ENCODE measurements at regions of chr17 and their contacts with region 1.

Region 1: DNA sequence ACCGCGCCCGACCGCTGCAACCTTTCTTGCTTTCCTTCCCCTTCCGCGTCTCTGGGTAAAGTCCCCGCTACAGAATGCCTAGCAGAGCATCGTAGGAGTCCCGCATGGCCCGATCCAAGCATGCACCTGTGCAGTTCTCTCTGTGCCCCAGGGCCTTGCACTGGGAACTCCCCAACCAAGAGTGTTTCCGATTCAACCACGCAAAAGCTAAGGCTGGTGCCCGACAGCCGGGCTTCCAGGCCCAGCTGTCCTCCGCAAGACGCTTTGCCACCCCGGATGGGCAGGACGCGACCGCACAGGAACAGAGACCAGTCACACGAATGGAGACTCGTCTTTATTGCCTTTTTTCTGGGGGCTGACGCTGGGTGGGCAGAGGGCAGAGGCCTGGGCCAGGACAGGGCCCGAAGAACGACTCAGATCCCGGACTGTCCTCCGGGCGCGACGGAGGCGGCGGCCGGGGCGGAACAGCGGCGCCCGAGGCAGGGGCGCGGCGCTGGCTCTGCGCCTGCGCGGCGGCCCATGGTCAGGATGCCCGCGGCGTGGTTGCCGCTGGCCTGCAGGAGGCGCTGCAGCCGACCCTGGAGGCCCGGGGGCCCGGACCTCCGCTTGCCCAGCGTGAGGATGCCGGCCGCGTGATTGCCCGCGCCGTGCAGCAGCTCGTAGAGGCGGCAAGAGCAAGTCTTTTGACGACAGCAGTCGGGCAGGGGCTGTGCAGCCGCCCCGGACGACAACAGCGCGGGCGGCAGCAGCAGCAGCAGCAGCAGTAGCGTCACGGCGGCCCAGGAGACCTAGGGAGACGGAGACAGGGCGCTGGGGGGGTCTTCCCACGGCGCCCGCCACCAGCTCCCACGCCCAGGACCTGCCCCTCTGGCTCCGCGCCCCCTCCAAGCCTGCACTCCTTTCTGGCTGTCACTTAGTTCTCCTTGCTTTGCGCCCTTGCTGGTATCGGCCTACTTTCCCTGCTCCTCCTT is 1.2 kb downstream of the HCRT start:
- DNase-seq: peak; percentile 89
- ATAC-seq: peak; percentile 70
- H3K4me3 Mint-ChIP-seq: peak overlapping the region; percentile 91
- H3K27ac Mint-ChIP-seq: peak overlapping the region; percentile 88
- H3K4me1 Mint-ChIP-seq: peaks cover 46% of the 10 kb centered on the region
- H3K27me3 Mint-ChIP-seq: peaks cover 7% of the 10 kb centered on the region

Region 2: GRCh38 chr17:41966463-41967140 is 217.4 kb before region 1 on chr17 and contains the start of gene CNP:
- CTCF ChIA-PET with region 1: interaction called, 4 read pairs
- POLR2A ChIA-PET with region 1: interaction called, 12 read pairs
- intact Hi-C with region 1: loop called in 1 of 2 experiments (anchors 1 kb)
- DNase-seq: peak; percentile 95
- ATAC-seq: peak; percentile 75
- H3K4me3 Mint-ChIP-seq: peak within 1 kb of the TSS; percentile 79
- H3K27ac Mint-ChIP-seq: peak within 1 kb of the TSS; percentile 82
- H3K4me1 Mint-ChIP-seq: peaks cover 36% of the 10 kb centered on the region
- H3K27me3 Mint-ChIP-seq: no peaks in the 10 kb centered on the region
- total RNA-seq, gene CNP: 55.1 to 77.0 TPM

Region 3: GRCh38 chr17:42120770-42121769 is 63.0 kb before region 1 on chr17 and contains the start of gene KAT2A:
- CTCF ChIA-PET with region 1: interaction called, 5 read pairs
- POLR2A ChIA-PET with region 1: no interaction called
- intact Hi-C with region 1: loop called (anchors 1 kb)
- DNase-seq: peak; percentile 90
- ATAC-seq: peak; percentile 93
- H3K4me3 Mint-ChIP-seq: peak within 1 kb of the TSS; percentile 70
- H3K27ac Mint-ChIP-seq: peak within 1 kb of the TSS; percentile 76
- H3K4me1 Mint-ChIP-seq: peaks cover 29% of the 10 kb centered on the region
- H3K27me3 Mint-ChIP-seq: no peaks in the 10 kb centered on the region
- total RNA-seq, gene KAT2A: 46.2 to 54.8 TPM

Region 4: DNA sequence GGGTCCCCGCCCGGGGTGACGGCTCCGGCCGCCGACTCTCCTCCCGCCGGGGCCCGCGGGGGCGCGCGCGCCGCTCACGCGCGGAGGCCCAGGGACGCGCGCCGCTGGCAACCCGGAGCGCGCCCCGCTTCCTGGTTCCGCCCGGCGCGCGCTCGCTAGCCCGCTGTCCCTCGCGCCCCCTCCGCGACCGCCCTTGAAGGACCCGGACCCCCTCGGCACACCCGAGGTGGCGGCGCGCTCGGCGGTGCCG is 92.3 kb after region 1 on chr17 and contains the start of gene STAT5B:
- CTCF ChIA-PET with region 1: no interaction called
- POLR2A ChIA-PET with region 1: no interaction called
- intact Hi-C with region 1: loop called in 1 of 2 experiments (anchors 1 kb)
- DNase-seq: peak; percentile 80
- ATAC-seq: peak; percentile 51
- H3K4me3 Mint-ChIP-seq: peak within 1 kb of the TSS; percentile 94
- H3K27ac Mint-ChIP-seq: peak within 1 kb of the TSS; percentile 97
- H3K4me1 Mint-ChIP-seq: peaks cover 37% of the 10 kb centered on the region
- H3K27me3 Mint-ChIP-seq: no peaks in the 10 kb centered on the region
- total RNA-seq, gene STAT5B: 162 to 203 TPM

Region 5: DNA sequence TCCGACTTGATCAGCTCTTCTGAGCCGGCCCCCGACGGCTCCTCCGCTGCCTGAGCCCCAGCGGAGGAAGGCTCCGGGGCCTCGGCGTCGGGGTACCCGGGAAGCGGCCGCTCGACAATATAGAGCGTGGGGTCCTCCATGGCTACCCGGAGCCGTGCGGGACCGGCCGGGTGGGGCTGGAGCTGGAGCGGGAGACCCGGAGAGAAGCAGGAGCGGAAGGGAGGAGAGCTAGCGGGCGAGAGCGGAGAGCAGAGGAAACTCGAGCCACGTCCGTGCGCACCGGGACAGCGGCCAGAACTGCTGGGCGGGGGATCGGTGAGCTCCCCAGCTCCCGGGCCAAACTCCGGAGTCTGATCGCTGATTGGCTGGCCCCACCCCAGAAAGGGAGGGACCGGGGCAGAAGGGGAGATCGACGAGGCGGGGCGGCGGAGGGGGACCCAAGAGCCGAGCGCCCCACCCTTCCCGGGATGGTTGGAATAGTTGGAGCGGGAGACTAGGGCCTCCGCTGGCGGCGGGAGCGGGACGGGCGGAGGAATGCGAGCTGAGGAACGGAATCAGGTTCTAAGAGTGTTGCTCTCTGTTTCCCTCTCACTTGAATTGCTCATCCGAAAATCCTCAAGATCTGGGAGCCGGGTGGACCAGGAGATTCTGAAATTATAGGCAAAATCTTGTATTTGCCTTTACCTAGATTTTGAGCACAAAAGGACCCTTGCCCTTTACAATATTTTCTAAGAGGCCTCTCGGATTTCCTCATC is 239.1 kb after region 1 on chr17 and contains the start of gene CAVIN1:
- CTCF ChIA-PET with region 1: no interaction called
- POLR2A ChIA-PET with region 1: no interaction called
- intact Hi-C with region 1: loop called in 1 of 2 experiments (anchors 5 kb)
- DNase-seq: peak; percentile 54
- ATAC-seq: peak; percentile 42
- H3K4me3 Mint-ChIP-seq: peak within 1 kb of the TSS; percentile 75
- H3K27ac Mint-ChIP-seq: peak within 1 kb of the TSS; percentile 48
- H3K4me1 Mint-ChIP-seq: peaks cover 19% of the 10 kb centered on the region
- H3K27me3 Mint-ChIP-seq: peaks cover 26% of the 10 kb centered on the region
- total RNA-seq, gene CAVIN1: 4.2 to 4.4 TPM

Region 6: DNA sequence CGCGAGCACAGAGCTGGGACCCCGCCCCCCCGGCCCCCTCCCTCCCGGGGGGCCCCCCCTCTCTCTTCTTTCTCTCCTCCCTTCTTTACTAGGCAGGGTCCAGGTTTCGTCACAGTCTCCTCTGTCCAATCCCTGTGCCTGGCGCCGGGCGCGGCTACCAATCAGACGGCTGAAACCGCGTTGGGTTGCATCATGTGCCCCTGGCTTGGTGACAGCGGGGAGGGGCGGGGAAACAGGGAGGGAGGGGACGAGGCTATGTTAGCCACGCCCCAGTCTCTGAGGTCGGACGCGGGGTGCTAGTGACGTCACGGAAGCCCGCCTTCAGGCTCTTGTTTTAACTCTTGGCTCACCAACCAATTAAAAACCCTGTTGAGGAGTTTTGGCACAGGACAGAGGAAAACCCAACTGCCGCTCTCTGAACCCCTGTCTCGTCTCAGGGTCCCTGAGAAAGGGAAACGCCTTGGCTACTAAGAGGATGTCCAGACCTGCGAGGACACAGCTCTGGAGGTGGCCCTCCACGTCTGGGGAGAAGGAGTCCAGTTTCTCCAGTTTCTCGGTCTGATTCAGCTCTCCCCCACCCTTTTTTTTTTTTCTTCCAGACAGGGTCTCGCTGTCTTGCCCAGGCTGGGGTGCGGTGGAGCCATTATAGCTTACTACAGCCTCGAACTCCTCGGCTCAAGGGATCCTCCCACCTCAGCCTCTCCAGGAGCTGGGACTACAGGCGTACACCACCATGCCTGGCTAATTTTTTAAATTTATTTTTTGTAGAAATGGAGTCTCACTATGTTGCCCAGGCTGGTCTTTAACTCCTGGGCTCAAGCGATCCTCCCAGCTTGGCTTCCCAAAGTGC is 493.2 kb after region 1 on chr17:
- CTCF ChIA-PET with region 1: no interaction called
- POLR2A ChIA-PET with region 1: no interaction called
- intact Hi-C with region 1: loop called in 1 of 2 experiments (anchors 5 kb)
- DNase-seq: peak; percentile 100
- ATAC-seq: peak; percentile 84
- H3K4me3 Mint-ChIP-seq: peak overlapping the region; percentile 70
- H3K27ac Mint-ChIP-seq: peak overlapping the region; percentile 69
- H3K4me1 Mint-ChIP-seq: peaks cover 49% of the 10 kb centered on the region
- H3K27me3 Mint-ChIP-seq: peaks cover 29% of the 10 kb centered on the region